SK-N-SH (cell line): ENCODE measurements at regions of chr11 and their contacts with region 1.

Region 1: GRCh38 chr11:123560006-123560405 is 94.4 kb downstream of the SCN3B start:
- DNase-seq: peak; percentile 72
- H3K4me3 ChIP-seq: peak overlapping the region in 1 of 2 experiments; percentile 19; a peak in 2 of 4 replicates
- H3K27ac ChIP-seq: peak overlapping the region; percentile 3 to 36; a peak in 3 of 4 replicates
- H3K4me1 ChIP-seq: peaks cover 7 to 24% of the 10 kb centered on the region in 2 experiments; a peak in 3 of 4 replicates
- H3K27me3 ChIP-seq: no peaks in the 10 kb centered on the region
- CTCF ChIP-seq: no peak
- EP300 ChIP-seq: no peak
- RAD21 ChIP-seq: no peak

Region 2: DNA sequence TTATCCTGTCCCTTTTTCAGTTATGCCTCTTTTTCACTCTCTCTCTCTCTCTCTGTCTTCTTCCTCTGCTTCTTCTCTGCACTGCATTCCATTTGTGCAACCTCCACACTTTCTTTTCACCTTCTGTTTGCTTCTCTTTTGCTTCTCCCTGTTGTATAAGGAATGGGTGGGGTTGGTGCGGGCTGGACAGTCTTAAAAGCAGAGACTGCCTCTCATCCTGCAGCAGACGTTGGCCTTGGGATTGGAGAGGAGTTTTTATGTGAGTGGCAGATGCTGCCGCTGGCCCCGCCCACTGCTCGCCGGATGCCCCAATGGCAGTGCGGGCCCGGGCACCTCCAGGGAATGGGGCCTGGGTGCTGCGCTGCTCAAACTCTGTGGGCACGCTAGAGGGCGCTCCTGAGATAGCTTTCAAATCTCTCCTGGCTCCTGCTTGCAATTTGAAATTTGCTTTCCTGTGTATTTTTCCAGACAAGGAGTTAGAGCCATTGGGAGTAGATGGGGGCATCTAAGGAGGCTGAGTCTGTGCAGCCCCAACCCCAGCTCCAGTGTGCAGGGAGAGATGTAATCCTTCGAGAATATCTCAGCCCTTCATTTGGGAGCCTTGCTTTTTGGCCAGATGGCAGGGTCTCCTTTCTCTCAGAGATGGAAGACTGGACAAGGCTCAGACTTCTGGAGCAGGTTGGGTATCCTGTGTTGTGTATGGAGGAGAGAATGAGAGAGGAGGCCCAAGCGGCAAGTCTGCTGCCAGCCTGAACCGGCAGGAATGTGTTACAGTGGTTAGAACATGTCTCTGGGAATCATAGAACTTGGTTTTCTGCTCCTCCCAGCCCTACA is 48.8 kb before region 1 on chr11:
- CTCF ChIA-PET with region 1: interaction called, 46 read pairs
- POLR2A ChIA-PET with region 1: interaction called, 11 read pairs
- DNase-seq: peak; percentile 92
- H3K4me3 ChIP-seq: peak overlapping the region in 1 of 2 experiments; percentile 23; a peak in 2 of 4 replicates
- H3K27ac ChIP-seq: peak overlapping the region; percentile 44 to 68; a peak in 3 of 4 replicates
- H3K4me1 ChIP-seq: peaks cover 13 to 27% of the 10 kb centered on the region in 2 experiments; a peak in 3 of 4 replicates
- H3K27me3 ChIP-seq: no peaks in the 10 kb centered on the region
- CTCF ChIP-seq: peak; percentile 97
- EP300 ChIP-seq: no peak
- RAD21 ChIP-seq: peak; percentile 90

Region 3: GRCh38 chr11:123519055-123519796 is 40.8 kb before region 1 on chr11:
- CTCF ChIA-PET with region 1: interaction called, 44 read pairs
- POLR2A ChIA-PET with region 1: interaction called, 6 read pairs
- DNase-seq: peak; percentile 55
- H3K4me3 ChIP-seq: no peak overlapping the region
- H3K27ac ChIP-seq: peak overlapping the region in 1 of 2 experiments; percentile 11; a peak in 1 of 4 replicates
- H3K4me1 ChIP-seq: peaks cover 0 to 16% of the 10 kb centered on the region in 2 experiments; a peak in 1 of 4 replicates
- H3K27me3 ChIP-seq: no peaks in the 10 kb centered on the region
- CTCF ChIP-seq: no peak
- EP300 ChIP-seq: no peak
- RAD21 ChIP-seq: no peak

Region 4: DNA sequence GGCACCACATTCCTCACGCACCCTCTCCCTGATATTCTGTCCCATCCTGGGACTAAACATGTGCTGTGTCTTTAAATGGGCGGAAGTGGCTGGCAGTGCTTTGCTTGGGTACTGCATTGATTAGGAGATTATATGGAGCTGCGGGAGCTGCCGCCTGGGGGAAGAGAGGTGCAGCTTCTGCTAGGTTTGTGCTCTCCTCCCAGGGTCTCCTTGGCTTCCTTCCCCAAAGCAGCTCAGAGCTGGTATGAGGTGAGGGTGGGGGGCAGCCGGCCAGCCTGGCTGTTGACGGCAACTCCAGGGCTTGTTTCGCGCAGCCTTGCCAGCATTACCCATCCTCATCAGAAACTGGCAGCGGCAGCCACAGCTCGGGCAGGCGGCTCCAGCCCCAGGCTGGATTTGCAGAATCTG is 34.5 kb before region 1 on chr11:
- CTCF ChIA-PET with region 1: interaction called, 44 read pairs
- POLR2A ChIA-PET with region 1: interaction called, 17 read pairs
- DNase-seq: peak; percentile 72
- H3K4me3 ChIP-seq: peak overlapping the region in 1 of 2 experiments; percentile 34; a peak in 1 of 4 replicates
- H3K27ac ChIP-seq: peak overlapping the region in 1 of 2 experiments; percentile 50; a peak in 2 of 4 replicates
- H3K4me1 ChIP-seq: peaks cover 0 to 17% of the 10 kb centered on the region in 2 experiments; a peak in 1 of 4 replicates
- H3K27me3 ChIP-seq: no peaks in the 10 kb centered on the region
- CTCF ChIP-seq: no peak
- EP300 ChIP-seq: no peak
- RAD21 ChIP-seq: no peak

Region 5: GRCh38 chr11:123536690-123537437 is 23.1 kb before region 1 on chr11:
- CTCF ChIA-PET with region 1: interaction called, 26 read pairs
- POLR2A ChIA-PET with region 1: no interaction called
- DNase-seq: no peak
- H3K4me3 ChIP-seq: no peak overlapping the region
- H3K27ac ChIP-seq: no peak overlapping the region
- H3K4me1 ChIP-seq: no peaks in the 10 kb centered on the region; a peak in 1 of 4 replicates
- H3K27me3 ChIP-seq: no peaks in the 10 kb centered on the region
- CTCF ChIP-seq: no peak
- EP300 ChIP-seq: no peak
- RAD21 ChIP-seq: no peak

Region 6: DNA sequence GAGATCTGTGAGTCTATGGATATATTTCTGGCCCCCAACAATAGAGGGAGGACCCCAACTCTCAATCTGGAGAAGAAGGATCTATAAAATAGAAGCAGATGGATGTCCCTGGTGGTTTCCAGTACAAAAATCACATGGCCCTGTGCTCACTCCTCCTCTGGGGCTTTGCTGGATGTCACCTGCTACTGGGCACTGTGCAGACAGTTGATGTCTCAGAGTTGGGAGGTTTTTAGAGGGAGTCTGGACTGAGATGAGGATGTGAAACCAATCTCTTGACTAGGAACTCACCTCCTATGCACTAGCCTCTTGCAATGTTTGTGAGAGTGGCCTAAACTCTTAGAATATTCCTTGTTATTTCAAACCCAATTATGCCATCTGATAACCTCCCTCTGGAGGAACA is 12.8 kb before region 1 on chr11:
- CTCF ChIA-PET with region 1: interaction called, 22 read pairs
- POLR2A ChIA-PET with region 1: no interaction called
- DNase-seq: no peak
- H3K4me3 ChIP-seq: no peak overlapping the region
- H3K27ac ChIP-seq: peak overlapping the region in 1 of 2 experiments; percentile 34; a peak in 1 of 4 replicates
- H3K4me1 ChIP-seq: peaks cover 23 to 30% of the 10 kb centered on the region in 2 experiments; a peak in 3 of 4 replicates
- H3K27me3 ChIP-seq: no peaks in the 10 kb centered on the region
- CTCF ChIP-seq: no peak
- EP300 ChIP-seq: no peak
- RAD21 ChIP-seq: no peak